B cell (primary cell): ENCODE measurements at regions of chr9 and their contacts with region 1.

Region 1: DNA sequence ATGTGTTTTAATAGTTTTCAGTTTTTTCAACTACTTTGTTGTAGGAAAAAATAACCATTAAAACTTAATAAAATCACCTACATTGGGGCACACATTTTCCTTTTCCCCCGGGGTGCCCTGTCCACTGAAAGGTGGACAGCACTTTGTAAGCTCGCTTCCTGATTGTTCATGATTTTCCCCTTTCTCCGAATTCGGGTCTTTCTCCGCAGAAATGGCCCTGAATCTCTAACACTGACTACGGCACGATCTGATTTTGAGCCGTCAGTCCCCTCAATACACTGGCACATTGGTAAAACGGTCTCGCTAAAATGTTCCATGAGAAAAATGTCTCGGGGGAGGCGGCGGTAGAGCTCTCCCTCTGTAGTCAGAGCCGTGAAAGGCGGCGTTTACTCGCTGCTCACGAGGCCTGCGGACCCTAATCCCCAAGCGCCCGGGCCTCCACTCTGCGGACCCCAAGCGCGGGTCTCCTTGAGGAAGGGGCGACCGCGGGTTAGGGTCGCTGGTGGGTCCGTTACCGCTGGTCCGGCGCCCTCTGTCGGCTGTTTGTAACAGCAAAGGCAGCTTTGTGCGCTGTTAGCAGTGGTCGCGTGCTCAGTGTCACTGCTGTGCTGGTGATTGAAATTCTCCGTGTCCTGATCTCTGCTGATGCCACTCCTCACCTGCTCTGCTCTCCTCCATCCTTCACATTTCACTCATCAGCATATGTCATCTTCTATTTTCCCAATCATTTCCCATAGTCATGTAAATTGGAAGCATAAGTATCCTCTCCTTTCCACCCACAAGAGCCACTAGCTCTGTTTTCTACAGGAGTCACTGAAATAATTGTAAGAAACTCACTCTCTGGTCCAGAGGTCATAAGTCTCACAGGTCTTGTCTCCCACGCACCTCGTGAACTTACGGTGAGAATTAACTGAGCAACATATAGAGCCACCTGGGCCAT is 10.8 kb upstream of the IFNA2 start:
- DNase-seq: peak; percentile 74
- ATAC-seq: peak; percentile 52
- H3K4me3 ChIP-seq: peak overlapping the region in 4 of 5 experiments; percentile 22 to 52 (median 32)
- H3K4me3 Mint-ChIP-seq: peak overlapping the region; percentile 68
- H3K27ac ChIP-seq: no peak overlapping the region
- H3K27ac Mint-ChIP-seq: no peak overlapping the region
- H3K4me1 ChIP-seq: peaks cover 8 to 11% of the 10 kb centered on the region in 2 donors
- H3K4me1 Mint-ChIP-seq: peaks cover 18% of the 10 kb centered on the region
- H3K27me3 ChIP-seq: peaks cover 3 to 57% (median 37%) of the 10 kb centered on the region in 4 experiments
- H3K27me3 Mint-ChIP-seq: peaks cover 69% of the 10 kb centered on the region
- CTCF ChIP-seq: peak; percentile 87

Region 2: GRCh38 chr9:21317956-21318923 is 77.8 kb before region 1 on chr9:
- CTCF ChIA-PET with region 1: interaction called, 159 read pairs
- POLR2A ChIA-PET with region 1: no interaction called
- intact Hi-C with region 1: no loop called
- DNase-seq: peak; percentile 48
- ATAC-seq: peak; percentile 64
- H3K4me3 ChIP-seq: no peak overlapping the region
- H3K4me3 Mint-ChIP-seq: no peak overlapping the region
- H3K27ac ChIP-seq: no peak overlapping the region
- H3K27ac Mint-ChIP-seq: no peak overlapping the region
- H3K4me1 ChIP-seq: no peaks in the 10 kb centered on the region
- H3K4me1 Mint-ChIP-seq: peaks cover 4% of the 10 kb centered on the region
- H3K27me3 ChIP-seq: no peaks in the 10 kb centered on the region
- H3K27me3 Mint-ChIP-seq: peaks cover 9% of the 10 kb centered on the region
- CTCF ChIP-seq: peak; percentile 83

Region 3: GRCh38 chr9:21334701-21335632 is 61.1 kb before region 1 on chr9 and contains the start of gene KLHL9:
- CTCF ChIA-PET with region 1: interaction called, 86 read pairs
- POLR2A ChIA-PET with region 1: no interaction called
- intact Hi-C with region 1: loop called (anchors 2 kb)
- DNase-seq: peak; percentile 93
- ATAC-seq: peak; percentile 89
- H3K4me3 ChIP-seq: peak within 1 kb of the TSS; percentile 83 to 97 (median 89)
- H3K4me3 Mint-ChIP-seq: peak within 1 kb of the TSS; percentile 95
- H3K27ac ChIP-seq: peak within 1 kb of the TSS; percentile 90
- H3K27ac Mint-ChIP-seq: peak within 1 kb of the TSS; percentile 92
- H3K4me1 ChIP-seq: peaks cover 18 to 27% of the 10 kb centered on the region in 2 donors
- H3K4me1 Mint-ChIP-seq: peaks cover 49% of the 10 kb centered on the region
- H3K27me3 ChIP-seq: peaks cover 0 to 6% (median under 1%) of the 10 kb centered on the region in 4 experiments
- H3K27me3 Mint-ChIP-seq: peaks cover 12% of the 10 kb centered on the region
- CTCF ChIP-seq: no peak
- total RNA-seq, gene KLHL9: 17.5 and 17.6 TPM in 2 replicates

Region 4: GRCh38 chr9:21434202-21435014 is 38.4 kb after region 1 on chr9:
- CTCF ChIA-PET with region 1: interaction called, 20 read pairs
- POLR2A ChIA-PET with region 1: no interaction called
- intact Hi-C with region 1: loop called (anchors 5 kb)
- DNase-seq: peak; percentile 65
- ATAC-seq: no peak
- H3K4me3 ChIP-seq: no peak overlapping the region
- H3K4me3 Mint-ChIP-seq: no peak overlapping the region
- H3K27ac ChIP-seq: no peak overlapping the region
- H3K27ac Mint-ChIP-seq: peak overlapping the region; percentile 57
- H3K4me1 ChIP-seq: peaks cover 5 to 7% of the 10 kb centered on the region in 2 donors
- H3K4me1 Mint-ChIP-seq: peaks cover 14% of the 10 kb centered on the region
- H3K27me3 ChIP-seq: peaks cover 0 to 43% (median 28%) of the 10 kb centered on the region in 4 experiments
- H3K27me3 Mint-ChIP-seq: peaks cover 64% of the 10 kb centered on the region
- CTCF ChIP-seq: peak; percentile 66

Region 5: GRCh38 chr9:21542787-21543186 is 146.7 kb after region 1 on chr9:
- CTCF ChIA-PET with region 1: no interaction called
- POLR2A ChIA-PET with region 1: no interaction called
- intact Hi-C with region 1: no loop called
- DNase-seq: no peak
- ATAC-seq: no peak
- H3K4me3 ChIP-seq: no peak overlapping the region
- H3K4me3 Mint-ChIP-seq: no peak overlapping the region
- H3K27ac ChIP-seq: no peak overlapping the region
- H3K27ac Mint-ChIP-seq: no peak overlapping the region
- H3K4me1 ChIP-seq: no peaks in the 10 kb centered on the region
- H3K4me1 Mint-ChIP-seq: no peaks in the 10 kb centered on the region
- H3K27me3 ChIP-seq: no peaks in the 10 kb centered on the region
- H3K27me3 Mint-ChIP-seq: no peaks in the 10 kb centered on the region
- CTCF ChIP-seq: no peak